ENCODE measurements at regions of chr2 and their contacts with region 1.

Region 1: GRCh38 chr2:64062829-64063228 is 43.6 kb upstream of the VPS54 start:
- DNase-seq: peak; percentile 78
- H3K4me3 ChIP-seq: peak overlapping the region; percentile 36
- H3K27ac ChIP-seq: peak overlapping the region; percentile 96
- H3K4me1 ChIP-seq: peaks cover 96% of the 10 kb centered on the region
- CTCF ChIP-seq: no peak

Region 2: GRCh38 chr2:64052468-64053241 is 10.2 kb before region 1 on chr2:
- CTCF ChIA-PET with region 1: no interaction called
- POLR2A ChIA-PET with region 1: interaction called, 11 read pairs
- intact Hi-C with region 1: no loop called
- DNase-seq: peak; percentile 83
- H3K4me3 ChIP-seq: peak overlapping the region; percentile 11
- H3K27ac ChIP-seq: peak overlapping the region; percentile 96
- H3K4me1 ChIP-seq: peaks cover 84% of the 10 kb centered on the region
- CTCF ChIP-seq: no peak

Region 3: DNA sequence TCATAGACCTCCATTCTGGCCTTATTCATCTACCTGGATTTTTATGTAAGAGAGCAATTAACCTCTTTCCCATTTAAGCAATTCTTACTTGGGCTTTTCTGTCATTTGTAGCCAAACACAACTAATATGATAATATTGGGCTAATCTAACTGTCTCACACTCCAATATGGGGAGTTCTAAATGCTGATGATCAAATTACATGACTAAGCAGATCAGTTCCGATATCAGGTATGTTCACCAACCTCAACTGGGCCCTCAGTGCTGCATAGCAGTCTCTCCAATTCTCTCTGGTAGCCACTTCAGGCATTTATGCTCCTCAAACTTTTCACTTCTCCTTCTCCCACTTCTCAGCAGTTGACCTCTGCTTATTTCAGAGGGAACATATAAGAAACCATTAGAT is 17.4 kb after region 1 on chr2:
- CTCF ChIA-PET with region 1: interaction called, 3 read pairs
- POLR2A ChIA-PET with region 1: interaction called, 57 read pairs
- intact Hi-C with region 1: no loop called
- DNase-seq: no peak
- H3K4me3 ChIP-seq: no peak overlapping the region
- H3K27ac ChIP-seq: no peak overlapping the region
- H3K4me1 ChIP-seq: peaks cover 33% of the 10 kb centered on the region
- CTCF ChIP-seq: no peak

Region 4: DNA sequence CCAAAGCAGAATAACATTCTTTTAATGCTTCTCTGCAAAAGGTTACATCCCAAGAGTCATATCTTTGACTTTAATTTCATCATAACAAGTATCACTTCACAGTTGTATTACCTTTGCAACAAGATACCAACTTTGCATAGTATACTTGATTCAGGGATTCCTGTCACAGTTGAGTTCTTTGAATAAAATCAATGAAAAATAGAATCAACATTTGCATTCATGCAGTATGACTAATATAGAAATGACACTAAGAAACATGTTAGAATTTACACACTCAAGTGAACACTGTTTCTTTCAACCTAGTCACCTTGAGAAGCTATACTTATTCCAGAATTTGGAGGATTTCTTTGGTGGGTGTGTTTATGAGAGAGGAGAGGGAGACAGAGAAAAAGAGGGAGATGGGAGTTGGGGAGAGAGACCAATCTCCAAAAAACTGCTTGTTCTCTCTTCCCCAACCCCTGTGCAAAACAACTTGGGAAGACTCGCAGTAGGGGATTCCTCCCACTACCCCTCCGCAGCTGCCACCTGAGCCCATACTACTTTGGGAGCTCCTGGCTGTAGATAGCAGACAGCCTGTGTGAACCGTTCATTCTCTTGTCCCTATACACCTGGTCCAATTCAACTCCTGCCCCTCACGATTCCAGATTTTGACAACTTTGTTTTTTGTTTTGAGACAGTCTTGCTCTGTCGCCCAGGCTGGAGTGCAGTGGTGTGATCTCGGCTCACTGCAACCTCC is 23.7 kb after region 1 on chr2:
- CTCF ChIA-PET with region 1: interaction called, 3 read pairs
- POLR2A ChIA-PET with region 1: interaction called, 57 read pairs
- intact Hi-C with region 1: loop called (anchors 2 kb)
- DNase-seq: peak; percentile 75
- H3K4me3 ChIP-seq: peak overlapping the region; percentile 55
- H3K27ac ChIP-seq: peak overlapping the region; percentile 99
- H3K4me1 ChIP-seq: peaks cover 95% of the 10 kb centered on the region
- CTCF ChIP-seq: no peak

Region 5: GRCh38 chr2:64165706-64166105 is 102.9 kb after region 1 on chr2:
- CTCF ChIA-PET with region 1: no interaction called
- POLR2A ChIA-PET with region 1: interaction called, 14 read pairs
- intact Hi-C with region 1: no loop called
- DNase-seq: no peak
- H3K4me3 ChIP-seq: no peak overlapping the region
- H3K27ac ChIP-seq: no peak overlapping the region
- H3K4me1 ChIP-seq: peaks cover 29% of the 10 kb centered on the region
- CTCF ChIP-seq: no peak

Measured in OCI-LY7 (cell line).